ENCODE measurements at regions of chr11 and their contacts with region 1.

Region 1: DNA sequence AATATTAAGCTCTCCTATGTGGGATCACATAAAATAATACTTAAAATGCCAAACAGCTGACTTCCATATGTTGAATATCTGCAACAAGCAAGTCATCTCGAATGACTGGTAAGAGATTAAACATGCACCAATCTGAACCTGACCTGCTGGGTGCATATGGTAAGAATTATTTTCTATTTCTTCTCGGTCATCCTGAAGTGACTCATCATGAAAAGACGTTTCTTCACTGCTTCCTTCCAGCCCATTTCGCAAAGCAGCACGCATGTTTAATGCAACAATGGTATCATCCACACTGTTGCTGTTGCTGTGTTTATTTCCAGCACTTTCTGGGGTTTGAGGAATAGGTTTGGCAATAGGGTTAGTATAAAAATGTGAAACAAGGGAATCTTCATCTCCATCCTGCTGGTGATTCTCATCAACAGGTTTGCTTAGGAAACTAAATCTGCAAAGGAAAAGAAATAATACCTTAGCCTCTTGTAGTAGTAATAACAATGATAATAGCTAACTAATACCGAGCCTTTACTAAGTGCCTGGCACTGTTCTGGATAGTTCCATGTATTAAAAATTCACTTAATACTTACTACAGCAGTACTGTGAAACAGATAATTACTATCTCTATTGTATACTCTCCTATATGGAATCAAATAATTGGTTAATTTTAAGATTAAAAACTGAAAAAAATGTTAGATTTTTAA is 52.0 kb upstream of the CHRNA10 start:
- DNase-seq: no peak
- ATAC-seq: peak in 1 of 8 donors; percentile 33
- H3K4me3 ChIP-seq: no peak overlapping the region
- H3K27ac ChIP-seq: peak overlapping the region in 1 of 10 donors; percentile 18
- H3K4me1 ChIP-seq: peaks cover 0 to 4% (median 0%) of the 10 kb centered on the region in 9 donors
- H3K27me3 ChIP-seq: no peaks in the 10 kb centered on the region
- CTCF ChIP-seq: no peak

Region 2: GRCh38 chr11:3767536-3767935 is 44.4 kb after region 1 on chr11:
- intact Hi-C with region 1: loop called in 3 of 10 experiments (anchors 5 kb)
- DNase-seq: no peak
- ATAC-seq: no peak
- H3K4me3 ChIP-seq: no peak overlapping the region
- H3K27ac ChIP-seq: no peak overlapping the region
- H3K4me1 ChIP-seq: no peaks in the 10 kb centered on the region
- H3K27me3 ChIP-seq: no peaks in the 10 kb centered on the region
- CTCF ChIP-seq: no peak

Region 3: GRCh38 chr11:3773180-3773579 is 50.0 kb after region 1 on chr11:
- intact Hi-C with region 1: loop called in 1 of 10 experiments (anchors 5 kb)
- DNase-seq: no peak
- ATAC-seq: no peak
- H3K4me3 ChIP-seq: no peak overlapping the region
- H3K27ac ChIP-seq: no peak overlapping the region
- H3K4me1 ChIP-seq: peaks cover 0 to 6% (median 0%) of the 10 kb centered on the region in 9 donors
- H3K27me3 ChIP-seq: no peaks in the 10 kb centered on the region
- CTCF ChIP-seq: no peak

Region 4: DNA sequence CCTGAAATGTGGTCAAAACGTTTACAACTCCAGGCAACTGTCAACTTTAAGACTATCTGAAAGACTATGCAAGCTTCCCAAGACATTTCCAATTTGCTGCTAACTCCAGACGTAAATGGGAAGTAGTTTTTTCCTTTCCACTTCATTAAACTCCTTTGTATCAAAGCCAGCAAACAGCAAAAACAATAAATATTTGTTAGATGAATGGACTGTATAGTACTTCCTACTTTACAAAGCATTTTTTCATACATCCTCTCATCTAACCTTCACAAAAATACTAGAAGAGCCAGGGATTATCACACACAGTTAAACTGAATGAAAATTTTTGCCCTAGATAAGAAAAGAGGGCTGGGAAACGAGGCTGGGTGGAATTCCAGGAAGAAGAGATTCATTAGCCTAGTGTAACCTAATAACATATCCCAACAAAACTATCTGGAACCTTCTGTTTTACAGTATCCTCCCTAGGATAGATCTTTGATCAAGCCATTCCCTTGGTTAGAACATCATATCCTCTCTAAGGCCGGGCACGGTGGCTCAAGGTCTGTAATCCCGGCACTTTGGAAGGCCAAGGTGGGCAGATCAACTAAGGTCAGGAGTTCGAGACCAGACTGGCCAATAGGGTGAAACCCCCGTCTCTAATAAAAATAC is 63.7 kb after region 1 on chr11:
- intact Hi-C with region 1: no loop called
- DNase-seq: no peak
- ATAC-seq: peak in 2 of 8 donors; percentile 25 to 34
- H3K4me3 ChIP-seq: no peak overlapping the region
- H3K27ac ChIP-seq: peak overlapping the region in 3 of 10 donors; percentile 5 to 82 (median 8)
- H3K4me1 ChIP-seq: peaks cover 0 to 86% (median 35%) of the 10 kb centered on the region in 9 donors
- H3K27me3 ChIP-seq: no peaks in the 10 kb centered on the region
- CTCF ChIP-seq: no peak